OCI-LY7 (cell line): ENCODE measurements at regions of chr2 and their contacts with region 1.

Region 1: DNA sequence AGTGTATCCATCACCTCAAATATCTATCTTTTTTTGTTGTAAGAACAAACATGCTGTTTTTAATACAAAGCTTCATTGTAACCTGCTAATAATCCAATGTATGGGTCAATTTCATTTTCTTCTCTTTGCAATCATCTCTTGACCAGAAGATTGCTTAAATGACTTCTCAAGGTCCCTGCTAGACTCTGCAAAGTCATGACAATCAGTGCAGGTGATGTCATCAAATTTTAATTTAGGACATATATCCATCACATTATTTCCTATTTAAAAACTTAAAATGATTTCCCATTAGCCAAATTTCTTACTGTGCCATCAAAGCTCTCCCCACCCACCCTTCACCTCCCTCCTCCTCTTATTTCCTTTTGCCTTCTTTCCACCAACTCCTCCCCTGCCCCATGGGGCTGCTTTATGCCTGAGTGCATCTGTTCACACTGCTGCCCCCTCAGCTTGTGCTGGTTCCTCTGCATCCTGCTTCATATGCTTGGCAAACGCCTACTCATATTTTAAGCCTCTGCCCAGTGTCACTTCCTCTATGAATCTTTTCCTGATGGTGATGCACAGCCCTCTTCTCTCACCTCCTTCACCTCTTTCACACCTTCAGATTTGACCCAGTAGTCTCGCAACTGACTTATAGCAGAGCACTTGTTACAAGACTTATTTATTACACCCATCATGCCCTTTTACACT is 20.3 kb downstream of the PLEK start:
- DNase-seq: peak; percentile 89
- H3K4me3 ChIP-seq: peak overlapping the region; percentile 35
- H3K27ac ChIP-seq: peak overlapping the region; percentile 87
- H3K4me1 ChIP-seq: peaks cover 71% of the 10 kb centered on the region
- CTCF ChIP-seq: peak; percentile 47

Region 2: GRCh38 chr2:68411397-68412126 is 26.2 kb after region 1 on chr2:
- CTCF ChIA-PET with region 1: interaction called, 5 read pairs
- POLR2A ChIA-PET with region 1: interaction called, 8 read pairs
- intact Hi-C with region 1: loop called (anchors 2 kb)
- DNase-seq: peak; percentile 91
- H3K4me3 ChIP-seq: peak overlapping the region; percentile 47
- H3K27ac ChIP-seq: peak overlapping the region; percentile 92
- H3K4me1 ChIP-seq: peaks cover 57% of the 10 kb centered on the region
- CTCF ChIP-seq: no peak

Region 3: GRCh38 chr2:68423966-68424650 is 38.7 kb after region 1 on chr2:
- CTCF ChIA-PET with region 1: no interaction called
- POLR2A ChIA-PET with region 1: interaction called, 6 read pairs
- intact Hi-C with region 1: loop called (anchors 2 kb)
- DNase-seq: peak; percentile 81
- H3K4me3 ChIP-seq: peak overlapping the region; percentile 39
- H3K27ac ChIP-seq: peak overlapping the region; percentile 88
- H3K4me1 ChIP-seq: peaks cover 90% of the 10 kb centered on the region
- CTCF ChIP-seq: no peak

Region 4: DNA sequence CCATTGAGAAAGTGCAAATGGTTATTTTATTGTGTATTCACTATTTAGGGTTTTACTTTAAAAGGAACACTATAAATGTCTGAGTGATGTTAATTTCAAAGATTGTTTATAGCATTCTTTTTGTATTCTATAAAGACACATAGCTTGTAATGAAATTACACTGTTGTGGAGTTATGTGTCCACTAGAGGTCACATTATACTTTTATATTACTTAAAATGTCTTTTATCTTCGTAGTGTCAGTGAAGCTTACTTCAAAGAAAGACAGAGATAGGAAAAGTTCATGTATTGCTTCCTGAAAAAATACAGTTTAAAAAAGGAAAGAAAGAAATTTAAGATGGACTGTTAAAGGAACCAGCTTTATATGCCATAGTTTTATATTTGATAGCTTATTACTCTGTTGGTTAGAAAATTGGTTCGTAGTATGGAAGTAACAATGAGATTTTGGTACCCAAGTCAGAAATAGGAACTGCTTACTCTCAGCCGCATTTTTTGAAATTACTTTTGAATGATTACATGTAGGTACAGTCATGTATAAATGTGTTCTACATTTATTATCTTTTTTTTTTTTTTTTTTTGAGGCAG is 102.5 kb after region 1 on chr2:
- CTCF ChIA-PET with region 1: no interaction called
- POLR2A ChIA-PET with region 1: interaction called, 10 read pairs
- intact Hi-C with region 1: no loop called
- DNase-seq: peak; percentile 56
- H3K4me3 ChIP-seq: no peak overlapping the region
- H3K27ac ChIP-seq: no peak overlapping the region
- H3K4me1 ChIP-seq: no peaks in the 10 kb centered on the region
- CTCF ChIP-seq: peak; percentile 93